ENCODE measurements at regions of chr9 and their contacts with region 1.

Region 1: GRCh38 chr9:6739218-6739617 is 18.6 kb upstream of the KDM4C start:
- DNase-seq: no peak
- H3K4me3 ChIP-seq: no peak overlapping the region
- CTCF ChIP-seq: peak; percentile 5

Region 2: GRCh38 chr9:6584881-6585597 is 154.2 kb before region 1 on chr9:
- CTCF ChIA-PET with region 1: interaction called, 34 read pairs
- POLR2A ChIA-PET with region 1: no interaction called
- DNase-seq: no peak
- H3K4me3 ChIP-seq: no peak overlapping the region
- CTCF ChIP-seq: no peak

Region 3: GRCh38 chr9:6645355-6646292 is 93.6 kb before region 1 on chr9 and contains the start of gene GLDC:
- CTCF ChIA-PET with region 1: no interaction called
- POLR2A ChIA-PET with region 1: no interaction called
- DNase-seq: no peak
- H3K4me3 ChIP-seq: no peak within 1 kb of the TSS
- CTCF ChIP-seq: no peak

Region 4: GRCh38 chr9:6757132-6757455 is 17.9 kb after region 1 on chr9:
- CTCF ChIA-PET with region 1: interaction called, 16 read pairs
- POLR2A ChIA-PET with region 1: interaction called, 3 read pairs
- DNase-seq: no peak
- H3K4me3 ChIP-seq: peak overlapping the region; percentile 91
- CTCF ChIP-seq: no peak

Region 5: GRCh38 chr9:6771722-6772121 is 32.5 kb after region 1 on chr9:
- CTCF ChIA-PET with region 1: no interaction called
- POLR2A ChIA-PET with region 1: no interaction called
- DNase-seq: no peak
- H3K4me3 ChIP-seq: no peak overlapping the region
- CTCF ChIP-seq: no peak